PC-3 (cell line): ENCODE measurements at regions of chr18 and their contacts with region 1.

Region 1: DNA sequence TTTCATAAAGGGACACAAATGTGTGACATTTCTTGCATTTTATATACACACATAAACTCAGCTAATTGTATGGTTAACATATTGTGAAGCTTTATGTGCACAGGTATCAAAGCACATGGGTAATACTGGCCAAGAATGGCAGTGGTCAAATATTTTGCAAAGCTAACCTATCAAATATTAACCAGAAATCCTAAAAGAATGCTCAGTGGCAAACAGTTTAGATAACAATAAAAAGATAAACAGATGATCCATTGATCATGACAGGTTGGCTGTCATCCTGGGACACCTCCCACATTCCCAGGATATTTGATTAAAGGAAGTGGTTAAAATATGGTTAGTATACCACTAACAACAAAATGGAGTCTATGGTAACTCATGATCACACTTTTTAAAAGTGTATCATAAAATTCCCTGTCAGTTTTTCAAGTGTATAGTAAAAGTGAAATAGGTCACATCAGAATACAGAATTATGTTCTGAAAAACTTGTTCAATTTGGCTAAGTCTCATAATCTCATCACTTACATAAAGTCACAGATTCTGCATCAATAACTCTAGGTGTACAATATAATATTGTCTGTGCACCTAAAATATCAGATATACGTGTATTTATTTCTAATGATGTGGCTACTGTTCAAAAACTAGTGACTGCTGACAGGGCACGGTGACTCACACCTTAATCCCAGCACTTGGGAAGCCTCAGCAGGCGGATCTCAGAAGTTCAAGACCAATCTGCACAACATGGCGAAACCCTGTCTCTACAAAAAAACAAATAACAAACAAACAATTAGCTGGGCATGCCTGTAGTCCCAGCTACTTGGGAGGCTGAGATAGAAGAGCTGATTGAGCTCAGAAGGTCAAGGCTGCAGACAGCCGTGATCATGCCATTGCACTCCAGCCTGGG is 48.9 kb downstream of the CDH2 start:
- DNase-seq: peak; percentile 72
- ATAC-seq: peak; percentile 55
- H3K4me3 ChIP-seq: no peak overlapping the region
- H3K27ac ChIP-seq: 0 out of 2 replicates have a peak overlapping the region, but pooled peaks have one; percentile 10
- H3K4me1 ChIP-seq: peaks cover 44% of the 10 kb centered on the region
- H3K27me3 ChIP-seq: no peaks in the 10 kb centered on the region
- CTCF ChIP-seq: no peak

Region 2: DNA sequence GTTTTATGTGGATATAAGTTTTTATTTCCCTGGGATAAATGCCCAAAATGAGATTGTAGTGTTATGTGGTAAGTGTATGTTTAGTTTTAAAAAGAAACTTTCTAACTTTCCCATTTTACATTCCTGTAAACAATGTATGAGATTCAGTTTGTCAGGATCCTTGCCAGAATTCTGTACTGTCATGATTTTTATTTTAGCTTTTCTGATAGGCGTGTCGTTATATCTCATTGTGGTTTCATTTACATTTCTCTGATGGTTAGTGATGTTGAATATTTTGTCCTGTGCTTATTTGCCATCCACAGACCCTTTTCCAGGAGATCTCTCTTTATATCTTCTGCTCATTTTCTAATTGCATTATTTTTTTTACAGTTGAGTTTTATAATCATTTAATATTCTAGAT is 294.6 kb after region 1 on chr18:
- CTCF ChIA-PET with region 1: no interaction called
- POLR2A ChIA-PET with region 1: no interaction called
- intact Hi-C with region 1: loop called (anchors 10 kb)
- DNase-seq: peak; percentile 37
- ATAC-seq: peak; percentile 59
- H3K4me3 ChIP-seq: peak overlapping the region; percentile 76
- H3K27ac ChIP-seq: peak overlapping the region; percentile 74
- H3K4me1 ChIP-seq: 0 out of 2 replicates have a peak, but pooled peaks cover 5% of the 10 kb centered on the region
- H3K27me3 ChIP-seq: no peaks in the 10 kb centered on the region
- CTCF ChIP-seq: no peak

Region 3: DNA sequence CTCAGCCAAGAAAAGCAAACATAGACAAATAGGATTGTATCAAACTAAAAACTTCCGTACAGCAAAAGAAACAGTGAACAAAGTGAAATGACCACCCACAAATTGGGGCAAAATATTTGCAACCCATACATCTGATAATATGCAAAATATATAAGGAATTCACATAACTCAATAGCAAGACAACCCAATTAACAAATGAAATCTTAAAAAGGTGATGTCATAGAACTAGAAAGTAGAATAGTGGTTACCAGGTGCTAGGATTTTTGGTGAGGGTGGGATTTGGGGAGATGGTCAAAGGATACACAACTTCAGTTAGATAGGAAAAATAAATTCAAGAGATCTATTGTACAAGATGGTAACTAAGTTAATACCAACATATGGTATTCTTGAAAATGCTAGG is 1160.9 kb after region 1 on chr18:
- CTCF ChIA-PET with region 1: no interaction called
- POLR2A ChIA-PET with region 1: no interaction called
- intact Hi-C with region 1: no loop called
- DNase-seq: no peak
- ATAC-seq: no peak
- H3K4me3 ChIP-seq: no peak overlapping the region
- H3K27ac ChIP-seq: no peak overlapping the region
- H3K4me1 ChIP-seq: no peaks in the 10 kb centered on the region
- H3K27me3 ChIP-seq: no peaks in the 10 kb centered on the region
- CTCF ChIP-seq: no peak